ENCODE measurements at regions of chr15 and their contacts with region 1.

Region 1: DNA sequence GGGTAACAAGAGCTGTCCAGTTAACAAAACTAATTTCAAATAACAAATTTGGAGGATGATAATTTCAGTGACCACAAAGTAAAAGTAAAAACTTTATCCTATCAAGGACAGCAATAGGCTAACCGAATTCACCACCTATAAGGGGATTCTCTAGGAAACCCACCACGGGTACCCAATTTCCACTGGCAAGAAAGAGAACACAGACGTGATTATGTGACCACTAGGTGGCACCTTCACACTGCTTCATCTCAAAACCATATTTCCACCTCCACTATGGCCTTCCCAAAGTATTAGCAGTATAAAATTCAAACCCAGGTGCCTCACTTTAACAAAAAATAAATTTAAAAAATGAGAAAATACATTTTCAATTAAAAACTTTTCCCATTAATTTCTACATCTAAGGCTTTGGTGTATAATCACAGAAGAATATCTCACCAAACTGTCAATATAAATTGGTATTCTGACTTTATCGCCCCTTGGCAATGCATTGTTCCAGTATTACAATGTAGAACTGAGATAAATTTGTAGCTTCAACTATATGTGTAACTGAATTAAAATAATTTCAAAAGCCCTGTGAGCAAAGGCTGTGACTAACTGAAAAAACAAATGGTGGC is 96.5 kb downstream of the FSIP1 start:
- DNase-seq: no peak
- H3K4me3 ChIP-seq: no peak overlapping the region
- H3K27ac ChIP-seq: no peak overlapping the region
- H3K4me1 ChIP-seq: peaks cover 0 to 43% (median 28%) of the 10 kb centered on the region in 4 donors
- H3K27me3 ChIP-seq: no peaks in the 10 kb centered on the region
- CTCF ChIP-seq: peak; percentile 79 to 85 (median 82)
- EP300 ChIP-seq: no peak
- POLR2A ChIP-seq: no peak

Region 2: GRCh38 chr15:39874890-39875549 is 188.9 kb after region 1 on chr15:
- intact Hi-C with region 1: loop called (anchors 10 kb)
- DNase-seq: no peak
- H3K4me3 ChIP-seq: no peak overlapping the region
- H3K27ac ChIP-seq: no peak overlapping the region
- H3K4me1 ChIP-seq: no peaks in the 10 kb centered on the region
- H3K27me3 ChIP-seq: no peaks in the 10 kb centered on the region
- CTCF ChIP-seq: peak; percentile 54 to 72 (median 63)
- EP300 ChIP-seq: no peak
- POLR2A ChIP-seq: no peak

Region 3: GRCh38 chr15:39976291-39977274 is 290.5 kb after region 1 on chr15:
- intact Hi-C with region 1: loop called (anchors 10 kb)
- DNase-seq: no peak
- H3K4me3 ChIP-seq: peak overlapping the region; percentile 61 to 70 (median 65)
- H3K27ac ChIP-seq: peak overlapping the region; percentile 73 to 84 (median 80)
- H3K4me1 ChIP-seq: peaks cover 4 to 13% (median 9%) of the 10 kb centered on the region in 4 donors
- H3K27me3 ChIP-seq: no peaks in the 10 kb centered on the region
- CTCF ChIP-seq: peak; percentile 49 to 72 (median 54)
- EP300 ChIP-seq: no peak
- POLR2A ChIP-seq: no peak

Measured in esophagus muscularis mucosa (tissue), 4 donors.